Adrenal gland (tissue), 19 donors: ENCODE measurements at regions of chr16 and their contacts with region 1.

Region 1: GRCh38 chr16:48687421-48688038 is 77.5 kb upstream of the N4BP1 start:
- DNase-seq: peak; percentile 47 to 73 (median 63)
- H3K4me3 ChIP-seq: no peak overlapping the region
- H3K27ac ChIP-seq: no peak overlapping the region
- H3K4me1 ChIP-seq: no peaks in the 10 kb centered on the region
- H3K27me3 ChIP-seq: no peaks in the 10 kb centered on the region
- CTCF ChIP-seq: peak; percentile 66 to 82 (median 73)
- POLR2A ChIP-seq: no peak

Region 2: DNA sequence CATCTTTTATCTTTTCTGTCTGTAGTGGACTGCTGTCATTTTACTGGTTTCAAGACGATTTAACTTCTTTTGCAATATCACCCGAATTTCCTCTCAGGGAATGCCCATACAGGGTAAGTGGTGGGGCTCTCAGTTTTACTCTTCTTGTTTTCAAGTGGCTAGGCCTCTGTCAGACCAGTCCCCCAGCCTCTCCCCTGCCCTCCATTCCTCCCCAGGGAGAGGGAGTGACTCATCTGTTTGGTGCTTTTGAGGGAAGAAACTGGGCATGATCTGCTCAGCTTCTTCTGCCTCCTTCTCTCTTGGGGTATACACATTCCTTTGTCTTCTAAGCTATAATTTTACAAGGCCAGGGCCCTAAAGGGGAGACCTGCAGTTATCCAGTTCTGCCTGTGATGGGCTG is 262.1 kb after region 1 on chr16:
- intact Hi-C with region 1: no loop called
- DNase-seq: no peak
- H3K4me3 ChIP-seq: no peak overlapping the region
- H3K27ac ChIP-seq: no peak overlapping the region
- H3K4me1 ChIP-seq: no peaks in the 10 kb centered on the region
- H3K27me3 ChIP-seq: no peaks in the 10 kb centered on the region
- CTCF ChIP-seq: no peak
- POLR2A ChIP-seq: no peak

Region 3: GRCh38 chr16:49350265-49351095 is 663.0 kb after region 1 on chr16:
- intact Hi-C with region 1: loop called (anchors 2 to 5 kb)
- DNase-seq: peak; percentile 44 to 82 (median 66)
- H3K4me3 ChIP-seq: no peak overlapping the region
- H3K27ac ChIP-seq: no peak overlapping the region
- H3K4me1 ChIP-seq: no peaks in the 10 kb centered on the region
- H3K27me3 ChIP-seq: peaks cover 18% of the 10 kb centered on the region
- CTCF ChIP-seq: peak; percentile 55 to 78 (median 76)
- POLR2A ChIP-seq: no peak